Tibial artery (tissue), 4 donors: ENCODE measurements at regions of chr10 and their contacts with region 1.

Region 1: DNA sequence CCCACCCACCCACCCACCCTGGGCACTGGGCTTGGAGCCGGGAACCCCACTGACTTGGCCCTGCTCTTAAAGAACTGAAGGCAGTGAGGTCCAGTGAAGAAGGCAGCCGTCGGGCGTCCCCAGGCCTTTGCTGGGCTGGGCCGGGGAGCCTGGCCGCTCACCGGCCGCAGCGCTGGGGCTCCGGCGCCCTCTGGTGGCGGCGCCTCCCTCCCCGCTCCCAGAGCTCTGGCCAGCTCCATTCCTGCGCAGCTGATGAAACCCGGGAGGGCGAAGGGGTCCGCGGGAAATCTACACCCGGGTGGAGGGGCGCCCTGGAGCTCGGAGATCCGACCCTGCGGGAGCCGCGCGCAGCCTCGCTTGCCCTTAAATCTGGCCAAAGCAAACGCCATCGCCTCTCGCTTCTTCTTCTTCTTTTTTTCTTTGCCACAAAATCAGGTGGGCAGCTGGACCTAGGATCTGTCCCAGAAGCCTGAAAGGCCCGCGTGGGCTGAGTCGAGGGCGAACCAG is 1.7 kb upstream of the CXCL12 start:
- DNase-seq: peak; percentile 44 to 77
- H3K4me3 ChIP-seq: no peak overlapping the region
- H3K27ac ChIP-seq: no peak overlapping the region
- H3K4me1 ChIP-seq: peaks cover 0 to 65% (median 43%) of the 10 kb centered on the region in 4 donors
- H3K27me3 ChIP-seq: no peaks in the 10 kb centered on the region
- CTCF ChIP-seq: peak; percentile 92 to 93

Region 2: DNA sequence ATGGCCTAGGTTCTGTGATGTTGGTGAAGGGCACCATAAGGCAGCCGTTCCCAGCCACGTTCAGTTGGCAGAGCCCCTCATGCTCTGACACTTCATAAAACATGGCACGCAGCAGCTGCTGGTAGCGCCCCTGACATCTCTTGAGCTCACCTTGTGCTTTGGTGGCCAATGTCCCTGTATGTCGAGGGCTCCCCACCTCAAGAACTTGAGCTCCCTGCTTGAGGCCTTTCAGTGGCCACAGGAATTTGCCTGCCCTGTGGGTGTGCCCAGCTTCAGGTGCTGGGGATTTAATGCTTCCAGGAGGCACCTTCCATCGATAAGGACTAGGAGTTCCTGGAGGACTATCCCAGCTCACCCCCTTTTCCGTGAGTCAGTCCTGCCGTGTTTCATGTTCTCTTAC is 728.4 kb before region 1 on chr10:
- intact Hi-C with region 1: no loop called
- DNase-seq: no peak
- H3K4me3 ChIP-seq: no peak overlapping the region
- H3K27ac ChIP-seq: no peak overlapping the region
- H3K4me1 ChIP-seq: no peaks in the 10 kb centered on the region
- H3K27me3 ChIP-seq: peaks cover 0 to 8% of the 10 kb centered on the region in 2 donors
- CTCF ChIP-seq: no peak

Region 3: DNA sequence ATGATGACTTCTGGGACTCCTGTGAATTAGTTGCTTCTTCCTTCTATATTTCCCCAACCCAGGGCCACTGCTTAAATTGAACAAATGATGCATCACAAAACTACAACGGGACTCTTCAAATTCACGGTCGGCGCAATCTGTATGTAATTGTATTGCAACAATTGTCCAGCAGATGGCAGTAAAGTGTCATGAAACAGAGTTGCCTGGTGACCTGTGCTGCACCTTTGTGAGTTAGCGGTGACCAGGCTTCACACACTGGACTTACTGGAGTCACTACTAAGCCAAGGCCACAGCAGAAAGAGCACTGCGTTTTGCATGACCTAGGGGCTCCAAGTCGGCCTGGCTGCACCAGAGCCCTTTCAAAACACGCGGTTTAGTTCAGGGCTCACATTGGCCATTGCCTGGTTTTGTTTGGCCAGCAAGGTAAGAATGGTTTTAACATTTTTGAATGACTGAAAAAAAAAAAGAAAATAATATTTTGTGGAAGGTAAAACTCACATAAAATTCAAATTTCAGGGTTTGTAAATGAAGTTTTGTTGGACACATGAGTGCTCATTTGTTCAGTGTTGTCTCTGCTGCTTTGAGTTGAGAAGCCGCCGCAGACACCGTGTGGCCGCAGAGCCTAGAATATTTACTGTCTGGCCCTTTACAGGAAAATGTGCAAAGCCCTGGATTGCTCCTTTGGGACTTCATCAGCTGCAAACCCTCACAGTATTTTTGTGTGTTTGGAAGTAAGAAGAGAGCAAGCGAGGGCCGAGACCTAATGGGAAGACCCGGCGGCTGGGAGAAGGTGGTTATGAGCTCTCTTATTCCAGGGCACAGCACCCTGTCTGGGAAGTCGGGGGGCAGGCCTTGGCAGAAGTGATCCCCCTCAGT is 714.7 kb before region 1 on chr10:
- intact Hi-C with region 1: loop called (anchors 1 kb)
- DNase-seq: peak in 1 of 2 donors; percentile 52
- H3K4me3 ChIP-seq: no peak overlapping the region
- H3K27ac ChIP-seq: no peak overlapping the region
- H3K4me1 ChIP-seq: peaks cover 0 to 9% (median 5%) of the 10 kb centered on the region in 4 donors
- H3K27me3 ChIP-seq: peaks cover 0 to 26% of the 10 kb centered on the region in 2 donors
- CTCF ChIP-seq: peak; percentile 76 to 95

Region 4: GRCh38 chr10:43689955-43690771 is 696.4 kb before region 1 on chr10:
- intact Hi-C with region 1: loop called (anchors 5 kb)
- DNase-seq: peak; percentile 78 to 92
- H3K4me3 ChIP-seq: peak overlapping the region; percentile 58 to 65
- H3K27ac ChIP-seq: peak overlapping the region; percentile 68 to 92
- H3K4me1 ChIP-seq: peaks cover 0 to 26% (median 12%) of the 10 kb centered on the region in 4 donors
- H3K27me3 ChIP-seq: no peaks in the 10 kb centered on the region
- CTCF ChIP-seq: peak; percentile 84 to 96

Region 5: GRCh38 chr10:44051584-44052385 is 334.8 kb before region 1 on chr10:
- intact Hi-C with region 1: loop called (anchors 10 kb)
- DNase-seq: no peak
- H3K4me3 ChIP-seq: no peak overlapping the region
- H3K27ac ChIP-seq: no peak overlapping the region
- H3K4me1 ChIP-seq: peaks cover 0 to 34% (median 12%) of the 10 kb centered on the region in 4 donors
- H3K27me3 ChIP-seq: no peaks in the 10 kb centered on the region
- CTCF ChIP-seq: no peak

Region 6: GRCh38 chr10:44143556-44143955 is 243.0 kb before region 1 on chr10:
- intact Hi-C with region 1: no loop called
- DNase-seq: no peak
- H3K4me3 ChIP-seq: no peak overlapping the region
- H3K27ac ChIP-seq: no peak overlapping the region
- H3K4me1 ChIP-seq: no peaks in the 10 kb centered on the region
- H3K27me3 ChIP-seq: no peaks in the 10 kb centered on the region
- CTCF ChIP-seq: no peak

Region 7: GRCh38 chr10:44310762-44311562 is 75.6 kb before region 1 on chr10:
- intact Hi-C with region 1: loop called (anchors 5 kb)
- DNase-seq: peak; percentile 84 to 92
- H3K4me3 ChIP-seq: peak overlapping the region; percentile 25 to 47
- H3K27ac ChIP-seq: no peak overlapping the region
- H3K4me1 ChIP-seq: peaks cover 0 to 16% (median 11%) of the 10 kb centered on the region in 4 donors
- H3K27me3 ChIP-seq: no peaks in the 10 kb centered on the region
- CTCF ChIP-seq: peak; percentile 93 to 95

Region 8: GRCh38 chr10:44864637-44865288 is 478.2 kb after region 1 on chr10:
- intact Hi-C with region 1: loop called (anchors 2 kb)
- DNase-seq: peak; percentile 91 to 95
- H3K4me3 ChIP-seq: peak overlapping the region; percentile 52 to 64
- H3K27ac ChIP-seq: peak overlapping the region; percentile 67 to 74
- H3K4me1 ChIP-seq: peaks cover 0 to 25% (median 22%) of the 10 kb centered on the region in 4 donors
- H3K27me3 ChIP-seq: no peaks in the 10 kb centered on the region
- CTCF ChIP-seq: peak; percentile 97 to 99